Activated T-helper 2 cell treated with anti-CD3 and anti-CD28 coated beads, Interferon-gamma antibody, Interleukin-2, Interleukin-4, amounts not matched to agents 10 μg/mL and 5 μg/mL and 100 μg/mL, durations not matched to agents 14 hours and 24 hours and 36 hours (primary cell): ENCODE measurements at regions of chr11 and their contacts with region 1.

Region 1: DNA sequence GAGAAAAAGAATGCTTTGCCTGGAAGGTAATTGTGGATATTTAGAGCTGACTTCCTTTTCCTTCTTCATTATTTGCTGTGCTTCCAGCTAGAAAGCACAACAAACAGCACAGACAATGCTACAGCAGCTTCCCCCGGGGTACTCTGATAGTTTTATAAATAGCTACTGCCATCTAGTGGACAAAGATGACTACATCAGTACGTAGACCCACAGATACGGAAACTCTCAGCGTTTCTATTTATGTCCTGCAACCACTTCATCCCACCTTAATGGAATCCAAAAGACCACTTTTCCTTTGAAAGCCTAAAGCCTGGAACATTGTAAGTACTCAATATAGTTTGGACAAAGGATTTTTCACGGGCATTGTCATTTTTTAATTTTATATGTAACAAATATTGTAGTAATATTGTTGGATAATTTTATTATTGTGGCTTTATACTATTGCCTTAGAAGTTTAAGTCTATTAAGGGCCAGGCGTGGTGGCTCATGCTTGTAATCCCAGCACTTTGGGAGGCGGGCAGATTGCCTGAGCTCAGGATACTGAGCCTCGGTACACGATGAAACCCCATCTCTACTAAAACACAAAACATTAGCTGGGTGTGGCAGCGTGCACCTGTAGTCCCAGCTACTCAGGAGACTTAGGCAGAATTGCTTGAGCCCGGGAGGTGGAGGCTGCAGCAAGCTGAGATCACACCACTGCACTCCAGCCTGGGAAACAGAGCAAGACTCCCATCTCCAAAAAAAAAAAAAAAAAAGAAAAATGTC is 7.5 kb downstream of the HSPA8 start:
- DNase-seq: no peak
- H3K4me3 Mint-ChIP-seq: no peak overlapping the region
- H3K27ac Mint-ChIP-seq: peak overlapping the region; percentile 55
- H3K4me1 Mint-ChIP-seq: peaks cover 40% of the 10 kb centered on the region
- H3K27me3 Mint-ChIP-seq: no peaks in the 10 kb centered on the region

Region 2: GRCh38 chr11:122863704-122864326 is 190.7 kb before region 1 on chr11:
- intact Hi-C with region 1: loop called (anchors 1 kb)
- DNase-seq: no peak
- H3K4me3 Mint-ChIP-seq: no peak overlapping the region
- H3K27ac Mint-ChIP-seq: no peak overlapping the region
- H3K4me1 Mint-ChIP-seq: peaks cover 5% of the 10 kb centered on the region
- H3K27me3 Mint-ChIP-seq: peaks cover 40% of the 10 kb centered on the region

Region 3: GRCh38 chr11:122882857-122883645 is 171.4 kb before region 1 on chr11:
- intact Hi-C with region 1: no loop called
- DNase-seq: peak; percentile 33
- H3K4me3 Mint-ChIP-seq: peak overlapping the region; percentile 79
- H3K27ac Mint-ChIP-seq: peak overlapping the region; percentile 62
- H3K4me1 Mint-ChIP-seq: peaks cover 16% of the 10 kb centered on the region
- H3K27me3 Mint-ChIP-seq: peaks cover 24% of the 10 kb centered on the region

Region 4: DNA sequence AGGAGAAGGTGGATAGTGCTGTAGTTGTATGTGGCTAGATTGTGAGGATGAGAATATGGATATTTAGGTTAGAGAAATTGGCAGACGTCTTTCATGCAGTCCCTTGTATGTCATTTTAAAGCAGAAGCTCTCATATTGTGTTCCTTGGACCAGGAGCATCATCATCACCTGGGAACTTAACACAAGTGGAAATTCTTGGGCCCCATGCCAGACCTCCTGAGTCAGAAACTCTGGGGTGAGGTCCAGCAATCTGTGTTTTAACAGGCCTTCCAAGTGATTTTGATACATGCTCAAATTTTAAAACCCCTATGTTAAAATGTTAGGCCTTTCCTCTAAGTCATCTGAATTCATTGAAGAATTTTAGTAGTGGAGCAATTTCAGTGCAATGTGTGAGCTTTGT is 137.2 kb before region 1 on chr11:
- intact Hi-C with region 1: no loop called
- DNase-seq: no peak
- H3K4me3 Mint-ChIP-seq: no peak overlapping the region
- H3K27ac Mint-ChIP-seq: no peak overlapping the region
- H3K4me1 Mint-ChIP-seq: no peaks in the 10 kb centered on the region
- H3K27me3 Mint-ChIP-seq: no peaks in the 10 kb centered on the region

Region 5: DNA sequence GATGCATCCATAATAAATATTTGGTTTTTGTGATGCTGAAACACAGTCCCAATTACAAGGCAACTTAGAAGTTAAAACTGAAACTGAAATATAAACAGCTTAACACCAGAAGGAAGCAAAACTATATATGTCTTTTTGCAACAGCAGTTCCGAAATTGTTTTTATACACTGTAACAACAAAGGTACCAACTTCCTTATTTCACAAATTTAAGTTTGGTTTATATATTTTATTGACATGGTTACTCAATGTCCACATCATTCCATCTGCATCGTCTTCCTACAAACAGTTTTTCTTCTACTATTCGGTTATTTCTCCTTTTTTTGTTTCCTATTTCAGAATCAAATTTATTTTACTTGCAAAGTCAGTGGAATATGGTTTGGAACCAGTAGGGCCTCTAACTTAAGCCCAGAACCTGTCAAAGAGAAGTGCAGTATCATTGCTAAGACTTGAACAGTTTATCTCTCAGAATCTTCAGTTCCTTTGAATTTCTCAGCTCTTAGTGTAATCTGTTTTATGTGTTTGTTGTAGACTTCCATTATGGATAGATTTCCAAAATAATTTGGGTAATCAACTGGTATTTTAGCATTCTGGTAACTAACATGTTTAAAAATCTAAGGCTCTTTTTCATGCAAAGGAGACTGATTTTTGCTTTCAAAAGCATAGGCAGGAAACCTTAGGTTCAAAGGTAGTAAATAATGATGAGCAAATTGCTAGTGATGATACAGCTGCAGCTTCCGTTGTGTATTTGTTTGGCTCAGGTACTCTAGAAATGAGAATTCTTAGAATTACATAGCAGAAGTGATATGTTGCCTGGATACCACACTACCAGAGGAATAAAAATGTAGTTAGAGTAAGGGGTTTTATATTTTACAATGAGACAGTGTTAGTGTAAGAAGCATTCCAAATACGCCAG is 15.7 kb after region 1 on chr11:
- intact Hi-C with region 1: no loop called
- DNase-seq: no peak
- H3K4me3 Mint-ChIP-seq: peak overlapping the region; percentile 86
- H3K27ac Mint-ChIP-seq: peak overlapping the region; percentile 99
- H3K4me1 Mint-ChIP-seq: peaks cover 56% of the 10 kb centered on the region
- H3K27me3 Mint-ChIP-seq: no peaks in the 10 kb centered on the region

Region 6: DNA sequence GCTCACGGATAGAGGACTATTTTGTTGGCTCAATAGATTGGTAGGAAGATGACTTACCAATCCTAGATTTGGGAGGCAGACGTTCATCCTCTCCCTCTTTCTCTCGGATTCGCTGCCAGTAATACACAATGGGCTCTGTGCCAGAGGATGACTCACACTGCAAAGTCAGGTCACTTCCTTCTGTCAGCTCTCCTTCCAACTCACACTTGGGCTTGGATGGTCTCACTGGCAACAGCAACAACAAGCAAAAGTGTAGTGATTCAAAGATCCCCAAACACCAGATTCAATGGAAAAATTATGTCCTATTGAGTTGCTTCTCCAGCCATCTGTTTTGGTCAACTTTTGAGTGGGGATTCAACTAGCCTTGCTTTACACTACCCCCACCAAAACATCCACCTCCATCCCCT is 29.1 kb after region 1 on chr11:
- intact Hi-C with region 1: no loop called
- DNase-seq: peak; percentile 59
- H3K4me3 Mint-ChIP-seq: peak overlapping the region; percentile 66
- H3K27ac Mint-ChIP-seq: peak overlapping the region; percentile 82
- H3K4me1 Mint-ChIP-seq: peaks cover 47% of the 10 kb centered on the region
- H3K27me3 Mint-ChIP-seq: no peaks in the 10 kb centered on the region